ENCODE measurements at regions of chr4 and their contacts with region 1.

Region 1: GRCh38 chr4:85250852-85251251 is 224.1 kb upstream of the ARHGAP24 start:
- DNase-seq: no peak
- ATAC-seq: no peak

Region 2: DNA sequence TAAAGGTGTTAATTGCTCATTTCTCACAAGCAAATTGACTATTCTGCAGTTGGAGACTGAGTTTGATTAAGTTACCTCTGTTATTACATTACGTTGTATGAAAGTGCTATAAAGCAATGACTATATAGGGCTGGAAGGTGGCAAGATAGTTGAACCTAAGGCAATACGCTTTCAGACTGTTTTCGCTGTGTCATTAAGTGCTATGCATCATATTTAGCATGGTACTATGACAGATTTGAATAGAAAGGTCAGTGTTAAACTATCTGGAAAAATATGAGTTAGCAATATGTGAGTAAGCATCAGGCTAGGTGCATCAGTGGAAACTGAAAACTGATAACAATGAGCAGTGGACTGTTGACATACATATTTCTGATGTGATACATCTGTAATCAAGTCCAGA is 18.1 kb after region 1 on chr4:
- intact Hi-C with region 1: loop called (anchors 1 kb)
- DNase-seq: no peak
- ATAC-seq: no peak

Measured in Right ventricle myocardium inferior (tissue), 1 donor.